ENCODE measurements at regions of chr4 and their contacts with region 1.

Region 1: GRCh38 chr4:78656968-78657445 is 105.4 kb downstream of the ANXA3 start:
- DNase-seq: no peak
- H3K4me3 ChIP-seq: peak overlapping the region in 3 of 8 donors; percentile 5 to 25 (median 6)
- H3K27ac ChIP-seq: peak overlapping the region; percentile 9 to 86 (median 76)
- H3K4me1 ChIP-seq: peaks cover 28 to 80% (median 62%) of the 10 kb centered on the region in 6 donors
- H3K27me3 ChIP-seq: no peaks in the 10 kb centered on the region
- CTCF ChIP-seq: no peak
- POLR2A ChIP-seq: no peak

Region 2: GRCh38 chr4:78481180-78481579 is 175.8 kb before region 1 on chr4:
- intact Hi-C with region 1: no loop called
- DNase-seq: no peak
- H3K4me3 ChIP-seq: no peak overlapping the region
- H3K27ac ChIP-seq: no peak overlapping the region
- H3K4me1 ChIP-seq: no peaks in the 10 kb centered on the region
- H3K27me3 ChIP-seq: no peaks in the 10 kb centered on the region
- CTCF ChIP-seq: no peak
- POLR2A ChIP-seq: no peak

Region 3: DNA sequence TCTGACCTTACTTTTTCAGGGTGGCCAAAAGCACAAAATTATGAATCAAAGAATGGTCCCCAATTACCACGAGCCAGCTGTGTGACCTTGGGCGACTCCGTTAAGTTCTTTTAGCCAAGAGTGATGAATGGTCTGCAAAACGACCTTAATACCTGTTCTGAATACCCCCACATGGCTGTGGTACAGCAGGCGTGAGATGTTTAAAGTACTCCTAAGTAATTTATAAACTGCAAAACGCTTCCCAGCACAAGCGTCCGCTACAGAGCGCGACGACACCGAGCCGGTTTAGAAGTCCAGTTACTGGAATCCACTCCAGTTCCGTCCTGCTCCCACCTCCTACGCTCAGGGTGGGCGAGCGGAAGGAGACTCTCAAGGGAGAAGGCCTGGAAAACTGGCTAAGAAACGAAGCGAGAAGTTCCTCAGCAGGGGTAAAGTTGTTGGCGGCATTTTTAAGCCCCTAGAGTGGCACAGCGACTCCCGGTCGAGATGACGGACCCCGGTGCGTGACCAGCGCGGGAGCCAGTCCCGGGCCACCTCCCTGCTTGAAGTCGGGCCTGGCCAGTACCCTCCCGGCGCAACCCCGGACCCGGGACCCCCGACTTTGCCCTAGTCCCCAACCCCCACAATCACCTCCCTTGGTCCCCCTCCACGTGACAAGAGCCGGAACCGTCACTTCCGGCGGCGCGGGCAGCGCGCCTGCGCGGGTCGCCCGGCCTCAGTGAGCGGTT is 118.5 kb after region 1 on chr4:
- intact Hi-C with region 1: loop called (anchors 10 kb)
- DNase-seq: peak; percentile 97
- H3K4me3 ChIP-seq: peak overlapping the region; percentile 61 to 87 (median 71)
- H3K27ac ChIP-seq: peak overlapping the region; percentile 94 to 99 (median 99)
- H3K4me1 ChIP-seq: peaks cover 3 to 54% (median 44%) of the 10 kb centered on the region in 6 donors
- H3K27me3 ChIP-seq: no peaks in the 10 kb centered on the region
- CTCF ChIP-seq: no peak
- POLR2A ChIP-seq: no peak

Measured in spleen (tissue), 13 donors.